ENCODE measurements at regions of chr7 and their contacts with region 1.

Region 1: DNA sequence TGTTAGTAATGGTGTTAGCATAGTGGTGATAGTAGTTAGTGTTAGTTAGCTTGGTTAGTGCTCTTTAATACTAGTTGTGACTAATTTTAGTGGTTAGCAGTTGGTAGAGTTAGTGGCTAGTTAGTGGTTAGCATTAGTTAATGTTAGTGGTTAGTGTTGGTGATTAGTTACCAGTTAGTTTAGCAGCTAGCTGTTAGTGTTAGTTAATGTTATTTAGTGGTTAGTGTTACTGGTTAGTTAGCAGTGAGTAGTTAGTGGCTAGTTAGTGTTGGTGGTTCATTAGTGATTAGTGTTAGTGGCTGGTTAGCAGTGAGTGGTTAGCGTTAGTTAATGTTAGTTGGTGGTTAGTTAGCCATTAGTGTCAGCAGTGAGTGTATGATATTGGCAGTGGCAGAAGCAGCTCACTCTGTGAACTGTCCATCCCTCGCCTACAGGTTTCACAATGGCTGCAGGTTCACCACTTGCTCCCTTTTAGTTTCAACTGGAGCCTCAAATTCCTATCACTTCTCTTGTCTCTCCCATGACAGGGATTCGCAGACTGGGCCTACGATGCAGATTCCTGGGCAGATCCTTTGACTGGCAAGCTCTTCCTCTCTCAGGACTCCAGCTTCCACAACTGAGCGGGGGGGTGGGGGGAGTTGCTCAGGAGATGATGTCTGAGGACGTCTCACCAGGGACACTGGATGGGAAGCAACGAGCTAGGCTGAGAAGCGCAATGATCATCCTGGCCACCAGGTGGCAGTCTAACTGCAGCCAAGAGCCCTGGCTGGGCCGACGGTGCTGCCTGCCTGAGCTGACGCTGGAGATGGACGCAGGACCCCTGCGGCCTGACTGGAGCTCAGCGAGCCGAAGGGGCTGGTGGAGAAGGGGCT is 19.5 kb downstream of the GHRHR start:
- DNase-seq: peak; percentile 96
- H3K4me3 ChIP-seq: peak overlapping the region in 2 of 4 donors; percentile 11 to 37
- H3K27ac ChIP-seq: no peak overlapping the region
- H3K4me1 ChIP-seq: peaks cover 6 to 22% (median 20%) of the 10 kb centered on the region in 4 donors
- H3K27me3 ChIP-seq: peaks cover 0 to 19% (median 0%) of the 10 kb centered on the region in 4 donors
- CTCF ChIP-seq: peak; percentile 79 to 97 (median 93)
- EP300 ChIP-seq: no peak
- POLR2A ChIP-seq: no peak

Region 2: DNA sequence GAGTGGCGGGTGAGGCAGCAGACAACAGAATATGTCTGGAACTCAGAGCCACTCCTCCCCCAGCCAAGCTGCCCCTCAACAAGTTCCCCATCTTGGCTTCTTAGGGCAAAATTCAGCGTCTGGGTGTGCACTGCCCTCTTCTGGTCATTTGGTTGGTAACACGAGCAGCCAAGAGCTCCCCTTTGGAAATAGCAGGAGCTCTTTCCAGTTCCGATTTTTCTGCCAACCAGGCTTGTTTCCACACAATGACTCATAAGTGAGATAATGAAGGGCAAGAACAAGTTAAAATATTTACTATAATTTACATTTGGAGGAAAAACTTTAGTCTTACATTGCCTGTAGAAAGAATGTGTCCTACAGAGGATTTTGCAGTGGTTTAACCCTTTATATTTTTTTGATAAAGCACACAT is 139.4 kb after region 1 on chr7:
- intact Hi-C with region 1: loop called (anchors 1 kb)
- DNase-seq: peak; percentile 93
- H3K4me3 ChIP-seq: no peak overlapping the region
- H3K27ac ChIP-seq: peak overlapping the region in 1 of 4 donors; percentile 26
- H3K4me1 ChIP-seq: peaks cover 0 to 14% (median 12%) of the 10 kb centered on the region in 4 donors
- H3K27me3 ChIP-seq: no peaks in the 10 kb centered on the region
- CTCF ChIP-seq: peak; percentile 76 to 83 (median 82)
- EP300 ChIP-seq: no peak
- POLR2A ChIP-seq: no peak